Naive thymus-derived CD4-positive, alpha-beta T cell (primary cell): ENCODE measurements at regions of chr15 and their contacts with region 1.

Region 1: DNA sequence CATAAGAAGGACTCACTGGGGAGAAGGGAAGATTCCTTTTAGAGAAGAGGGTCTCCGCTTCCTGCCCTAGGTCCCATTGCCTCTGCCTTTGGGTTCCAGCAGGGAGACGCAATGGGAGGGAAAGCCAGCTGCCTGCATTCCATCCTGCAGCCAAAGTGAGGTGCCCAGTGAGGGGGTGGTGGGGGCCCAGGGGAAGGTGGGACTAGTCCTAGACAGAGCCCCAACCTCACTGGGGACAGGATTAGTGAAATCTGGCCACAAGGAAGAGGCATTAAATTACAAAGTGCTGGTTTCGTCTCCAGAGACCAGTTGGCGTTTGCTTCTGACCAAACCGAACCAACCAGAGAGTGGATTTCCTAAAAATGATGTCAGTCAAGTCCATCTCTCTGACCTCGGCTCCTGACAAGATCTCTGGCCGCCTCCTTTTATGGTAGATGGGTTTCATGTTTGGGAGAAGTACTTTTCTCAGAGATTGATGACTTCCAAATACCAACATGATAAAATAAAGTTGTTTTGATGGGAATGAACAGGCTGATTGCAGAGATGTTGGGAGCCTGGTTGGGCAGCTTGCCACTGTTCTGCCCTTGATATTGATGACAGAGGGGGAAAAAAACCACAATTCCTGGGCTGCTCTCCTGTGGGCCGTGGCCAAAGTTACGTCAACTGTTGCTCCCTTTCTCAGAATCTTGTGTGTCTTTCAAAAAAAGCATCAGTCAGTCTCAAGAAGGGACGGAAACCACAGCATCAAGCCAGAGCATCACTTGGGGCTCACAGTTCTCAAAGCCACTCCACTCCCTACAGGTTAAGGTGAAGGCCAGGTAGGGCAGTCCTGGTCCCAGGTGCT is 24.7 kb downstream of the ITGA11 start:
- DNase-seq: no peak
- ATAC-seq: no peak
- H3K4me3 ChIP-seq: no peak overlapping the region
- H3K4me3 Mint-ChIP-seq: no peak overlapping the region
- H3K27ac ChIP-seq: no peak overlapping the region
- H3K27ac Mint-ChIP-seq: no peak overlapping the region
- H3K4me1 ChIP-seq: no peaks in the 10 kb centered on the region
- H3K4me1 Mint-ChIP-seq: peaks cover 0 to 4% (median 0%) of the 10 kb centered on the region in 7 donors
- H3K27me3 ChIP-seq: no peaks in the 10 kb centered on the region
- H3K27me3 Mint-ChIP-seq: no peaks in the 10 kb centered on the region

Region 2: GRCh38 chr15:68031404-68031803 is 375.9 kb before region 1 on chr15:
- CTCF ChIA-PET with region 1: no interaction called
- POLR2A ChIA-PET with region 1: no interaction called
- intact Hi-C with region 1: no loop called
- DNase-seq: no peak
- ATAC-seq: peak; percentile 31
- H3K4me3 ChIP-seq: no peak overlapping the region
- H3K4me3 Mint-ChIP-seq: no peak overlapping the region
- H3K27ac ChIP-seq: no peak overlapping the region
- H3K27ac Mint-ChIP-seq: no peak overlapping the region
- H3K4me1 ChIP-seq: no peaks in the 10 kb centered on the region
- H3K4me1 Mint-ChIP-seq: peaks cover 0 to 2% (median 0%) of the 10 kb centered on the region in 7 donors
- H3K27me3 ChIP-seq: peaks cover 0 to 5% of the 10 kb centered on the region in 2 donors
- H3K27me3 Mint-ChIP-seq: peaks cover 17 to 37% (median 23%) of the 10 kb centered on the region in 5 donors

Region 3: GRCh38 chr15:68383161-68384074 is 23.8 kb before region 1 on chr15:
- CTCF ChIA-PET with region 1: no interaction called
- POLR2A ChIA-PET with region 1: no interaction called
- intact Hi-C with region 1: no loop called
- DNase-seq: peak in 8 of 9 donors; percentile 25 to 60 (median 36)
- ATAC-seq: peak; percentile 88
- H3K4me3 ChIP-seq: no peak overlapping the region
- H3K4me3 Mint-ChIP-seq: no peak overlapping the region
- H3K27ac ChIP-seq: no peak overlapping the region
- H3K27ac Mint-ChIP-seq: peak overlapping the region in 1 of 9 donors; percentile 66
- H3K4me1 ChIP-seq: peaks cover 0 to 7% of the 10 kb centered on the region in 2 donors
- H3K4me1 Mint-ChIP-seq: peaks cover 11 to 26% (median 14%) of the 10 kb centered on the region in 7 donors
- H3K27me3 ChIP-seq: no peaks in the 10 kb centered on the region
- H3K27me3 Mint-ChIP-seq: no peaks in the 10 kb centered on the region

Region 4: DNA sequence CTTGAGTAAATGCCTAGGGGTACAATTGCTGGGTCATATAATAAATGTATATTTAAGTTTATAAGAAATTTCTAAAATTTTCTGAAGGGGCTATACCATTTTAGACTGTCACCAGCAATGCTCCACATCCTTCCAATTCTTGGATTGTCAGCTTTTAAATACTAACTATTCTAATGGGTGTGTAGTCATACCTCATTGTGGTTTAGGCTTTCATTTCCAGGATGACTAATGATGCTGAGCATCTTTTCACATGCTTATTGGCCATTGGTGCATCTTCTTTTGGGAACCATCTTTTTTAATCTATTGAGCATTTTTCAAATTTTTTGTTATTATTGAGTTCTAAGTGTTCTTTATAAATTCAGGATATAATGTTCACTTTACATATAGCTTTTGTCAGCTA is 119.0 kb after region 1 on chr15:
- CTCF ChIA-PET with region 1: no interaction called
- POLR2A ChIA-PET with region 1: no interaction called
- intact Hi-C with region 1: loop called in 1 of 2 experiments (anchors 10 kb)
- DNase-seq: no peak
- ATAC-seq: no peak
- H3K4me3 ChIP-seq: no peak overlapping the region
- H3K4me3 Mint-ChIP-seq: no peak overlapping the region
- H3K27ac ChIP-seq: no peak overlapping the region
- H3K27ac Mint-ChIP-seq: no peak overlapping the region
- H3K4me1 ChIP-seq: peaks cover 0 to 3% of the 10 kb centered on the region in 2 donors
- H3K4me1 Mint-ChIP-seq: peaks cover 7 to 35% (median 14%) of the 10 kb centered on the region in 7 donors
- H3K27me3 ChIP-seq: no peaks in the 10 kb centered on the region
- H3K27me3 Mint-ChIP-seq: peaks cover 18 to 38% (median 25%) of the 10 kb centered on the region in 5 donors

Region 5: DNA sequence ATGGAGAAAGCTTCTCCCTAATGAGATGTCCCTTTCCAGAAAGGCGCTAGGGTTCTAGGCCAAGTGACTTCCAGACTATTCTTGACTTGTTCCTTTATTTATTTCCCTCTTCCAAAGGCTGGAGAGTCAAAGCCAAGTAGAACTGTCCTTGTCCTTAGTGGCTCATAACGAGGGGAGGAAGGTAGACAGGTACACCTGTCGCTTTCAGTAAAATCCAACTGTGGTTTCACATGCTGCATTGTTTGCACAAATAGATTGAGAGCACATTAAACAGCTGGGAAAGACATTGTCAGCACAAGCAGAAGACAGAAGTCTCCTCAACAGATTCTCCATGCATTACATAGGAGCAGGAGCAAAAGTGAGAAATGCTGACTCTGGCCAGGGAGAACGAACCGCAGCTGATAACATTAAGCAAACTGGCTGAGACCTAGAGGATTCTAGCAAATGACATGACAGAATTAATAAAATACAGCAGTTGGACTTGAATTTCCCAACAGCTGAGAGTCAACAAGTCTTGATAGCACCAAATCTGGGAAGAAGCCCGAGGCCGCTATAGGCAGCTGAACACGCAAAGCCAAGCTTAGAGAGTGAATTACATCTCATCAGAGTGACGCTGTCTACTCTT is 1462.7 kb after region 1 on chr15:
- CTCF ChIA-PET with region 1: no interaction called
- POLR2A ChIA-PET with region 1: no interaction called
- intact Hi-C with region 1: no loop called
- DNase-seq: no peak
- ATAC-seq: no peak
- H3K4me3 ChIP-seq: no peak overlapping the region
- H3K4me3 Mint-ChIP-seq: no peak overlapping the region
- H3K27ac ChIP-seq: no peak overlapping the region
- H3K27ac Mint-ChIP-seq: no peak overlapping the region
- H3K4me1 ChIP-seq: no peaks in the 10 kb centered on the region
- H3K4me1 Mint-ChIP-seq: no peaks in the 10 kb centered on the region
- H3K27me3 ChIP-seq: no peaks in the 10 kb centered on the region
- H3K27me3 Mint-ChIP-seq: peaks cover 0 to 14% (median 5%) of the 10 kb centered on the region in 5 donors